ENCODE measurements at regions of chr2 and their contacts with region 1.

Region 1: GRCh38 chr2:59232394-59233165 is 991.5 kb upstream of the FANCL start:
- DNase-seq: no peak
- ATAC-seq: no peak

Region 2: GRCh38 chr2:59151805-59152204 is 80.8 kb before region 1 on chr2:
- intact Hi-C with region 1: loop called (anchors 2 kb)
- DNase-seq: no peak
- ATAC-seq: no peak

Region 3: DNA sequence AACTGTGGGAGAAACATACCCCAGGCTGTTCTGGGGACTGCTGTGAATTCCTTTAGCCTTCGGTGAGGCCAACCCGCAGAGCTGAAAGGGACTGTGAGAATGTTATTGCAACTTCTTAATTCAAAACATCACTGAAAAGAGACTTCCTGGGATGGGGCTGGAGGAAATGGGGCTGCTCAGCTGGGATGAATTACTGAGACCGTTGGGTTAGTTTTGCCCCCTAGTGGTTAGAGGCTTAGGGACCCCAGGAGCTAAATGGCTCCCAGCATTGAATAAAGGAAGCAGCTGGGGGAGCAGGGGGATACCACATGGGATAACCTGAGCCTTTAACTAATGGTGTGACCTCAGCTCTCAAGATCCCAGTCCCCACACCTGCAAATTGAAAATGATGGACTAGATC is 50.3 kb before region 1 on chr2:
- intact Hi-C with region 1: no loop called
- DNase-seq: no peak
- ATAC-seq: no peak